ENCODE measurements at regions of chr2 and their contacts with region 1.

Region 1: DNA sequence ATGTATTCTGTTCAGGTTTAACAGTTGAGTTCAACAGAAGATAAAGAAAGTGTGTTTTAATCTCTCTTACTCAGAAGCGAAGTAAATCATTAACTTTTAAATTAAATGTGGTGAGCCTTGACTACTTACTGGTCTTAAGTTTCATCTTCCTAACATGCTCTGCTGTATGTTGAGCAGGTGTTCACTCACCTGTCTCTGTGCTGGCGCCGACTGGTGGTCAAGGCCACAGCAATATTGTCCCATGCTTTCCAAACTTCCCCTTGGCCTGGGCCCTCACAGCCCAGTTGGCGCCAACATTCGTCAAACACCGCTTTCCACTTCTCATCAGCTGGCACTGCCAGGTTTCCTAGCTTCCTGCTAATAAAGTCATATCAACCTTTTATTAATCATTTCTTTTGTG is 17.0 kb upstream of the MPP4 start:
- DNase-seq: no peak
- H3K4me3 ChIP-seq: no peak overlapping the region
- H3K27ac ChIP-seq: no peak overlapping the region
- H3K4me1 ChIP-seq: no peaks in the 10 kb centered on the region
- H3K27me3 ChIP-seq: no peaks in the 10 kb centered on the region
- CTCF ChIP-seq: no peak

Region 2: DNA sequence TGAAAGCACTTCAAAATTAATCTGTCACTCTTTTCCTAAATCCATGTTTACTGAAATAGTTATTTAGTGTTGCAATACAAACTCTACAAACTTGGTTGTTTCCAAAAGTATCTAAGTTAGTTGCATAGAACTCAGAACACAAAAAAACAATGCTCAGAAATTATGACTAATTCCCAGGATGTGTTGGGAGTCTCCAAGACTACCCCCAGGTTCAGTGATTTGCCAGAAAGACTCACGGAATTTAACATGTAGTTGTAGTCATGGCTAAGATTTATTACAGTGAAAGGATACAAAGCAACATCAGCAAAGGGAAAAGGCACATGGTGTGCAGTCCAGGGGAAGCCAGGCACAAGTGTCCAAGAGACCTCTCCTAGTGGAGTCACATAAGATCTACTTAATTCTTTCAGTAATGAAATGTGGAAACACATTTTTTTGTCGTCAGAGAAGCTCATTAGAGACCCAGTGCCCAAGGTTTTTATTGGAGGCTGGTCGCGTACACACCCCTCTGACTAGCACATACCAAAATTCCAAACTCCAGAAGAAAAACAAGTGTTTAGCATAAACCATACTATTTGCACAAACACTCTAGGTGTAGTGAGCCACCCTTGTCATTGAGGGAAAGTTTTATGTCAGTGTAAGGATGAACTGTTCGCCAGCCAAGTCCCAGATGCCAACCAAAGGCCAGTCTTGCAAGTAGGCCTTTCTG is 1480.0 kb after region 1 on chr2:
- CTCF ChIA-PET with region 1: no interaction called
- POLR2A ChIA-PET with region 1: interaction called, 10 read pairs
- intact Hi-C with region 1: no loop called
- DNase-seq: no peak
- H3K4me3 ChIP-seq: no peak overlapping the region
- H3K27ac ChIP-seq: no peak overlapping the region
- H3K4me1 ChIP-seq: no peaks in the 10 kb centered on the region
- H3K27me3 ChIP-seq: no peaks in the 10 kb centered on the region
- CTCF ChIP-seq: no peak